ENCODE measurements at regions of chr9 and their contacts with region 1.

Region 1: GRCh38 chr9:30995951-30996738 is 1388.3 kb upstream of the ACO1 start:
- DNase-seq: no peak
- H3K4me3 Mint-ChIP-seq: no peak overlapping the region
- H3K27ac Mint-ChIP-seq: no peak overlapping the region
- H3K4me1 Mint-ChIP-seq: no peaks in the 10 kb centered on the region
- H3K27me3 Mint-ChIP-seq: no peaks in the 10 kb centered on the region
- CTCF ChIP-seq: no peak

Region 2: DNA sequence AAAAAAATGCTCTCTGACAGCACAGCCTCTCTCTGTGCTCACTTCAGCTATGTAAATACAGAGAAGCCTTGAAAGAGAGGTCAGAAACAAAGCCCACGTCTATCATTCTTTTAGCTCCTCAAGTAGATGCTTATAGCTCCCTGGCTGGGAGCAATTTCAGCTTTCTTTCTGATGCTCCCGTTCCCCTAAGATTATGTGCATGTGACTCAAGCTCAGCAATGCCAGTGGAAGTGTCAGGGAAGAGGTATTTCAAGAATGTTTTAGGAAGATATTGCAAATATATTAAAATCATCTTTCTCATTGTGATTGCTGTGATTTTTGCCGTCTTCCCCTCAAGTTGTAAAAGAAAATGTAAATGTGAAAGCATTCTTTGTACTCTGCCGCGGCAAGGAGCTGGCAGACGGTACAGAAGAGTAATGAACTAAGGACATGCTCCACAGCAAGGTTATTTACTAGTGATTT is 34.6 kb after region 1 on chr9:
- CTCF ChIA-PET with region 1: no interaction called
- intact Hi-C with region 1: loop called (anchors 5 kb)
- DNase-seq: no peak
- H3K4me3 Mint-ChIP-seq: peak overlapping the region; percentile 24
- H3K27ac Mint-ChIP-seq: no peak overlapping the region
- H3K4me1 Mint-ChIP-seq: peaks cover 13% of the 10 kb centered on the region
- H3K27me3 Mint-ChIP-seq: no peaks in the 10 kb centered on the region
- CTCF ChIP-seq: no peak